Right ventricle myocardium superior (tissue), 1 donor: ENCODE measurements at regions of chr1 and their contacts with region 1.

Region 1: DNA sequence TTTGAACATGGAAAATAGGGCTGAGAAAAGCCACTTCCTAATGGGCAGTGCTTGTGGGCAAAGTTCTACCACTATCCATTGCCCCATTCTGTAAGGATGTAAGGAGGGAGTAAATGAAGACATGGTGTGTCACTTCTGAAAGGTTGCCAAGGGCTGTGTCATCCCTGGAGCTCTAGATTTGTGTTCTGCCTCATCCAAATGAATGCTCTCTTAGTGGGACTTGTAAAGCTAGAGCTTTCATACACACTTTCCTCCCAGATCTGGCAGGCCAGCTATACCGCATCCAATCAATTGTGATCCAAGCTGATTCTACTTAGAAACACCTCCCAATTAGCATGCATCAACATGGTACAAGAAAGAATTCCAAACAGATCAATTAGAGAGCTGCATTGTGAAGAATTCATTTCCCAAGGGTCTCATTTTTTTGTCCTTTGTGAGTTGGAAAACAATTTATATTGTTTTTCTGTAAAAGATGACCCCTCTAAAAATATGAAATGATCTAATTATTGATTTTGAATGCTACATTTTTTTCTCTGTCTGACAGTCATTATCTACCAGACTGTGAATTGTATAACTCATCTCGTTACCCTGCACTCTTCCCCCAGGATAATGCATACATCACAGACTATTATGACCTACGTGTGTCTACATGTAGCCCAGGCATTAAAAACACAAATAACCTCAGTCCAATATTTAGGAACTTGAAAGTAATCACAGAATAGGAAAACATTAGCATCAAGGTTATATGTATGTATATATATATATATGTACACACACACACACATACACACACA is 117.1 kb upstream of the DUSP10 start:
- DNase-seq: no peak
- ATAC-seq: no peak

Region 2: GRCh38 chr1:221907166-221907932 is 48.3 kb after region 1 on chr1:
- intact Hi-C with region 1: loop called (anchors 10 kb)
- DNase-seq: no peak
- ATAC-seq: peak; percentile 53

Region 3: DNA sequence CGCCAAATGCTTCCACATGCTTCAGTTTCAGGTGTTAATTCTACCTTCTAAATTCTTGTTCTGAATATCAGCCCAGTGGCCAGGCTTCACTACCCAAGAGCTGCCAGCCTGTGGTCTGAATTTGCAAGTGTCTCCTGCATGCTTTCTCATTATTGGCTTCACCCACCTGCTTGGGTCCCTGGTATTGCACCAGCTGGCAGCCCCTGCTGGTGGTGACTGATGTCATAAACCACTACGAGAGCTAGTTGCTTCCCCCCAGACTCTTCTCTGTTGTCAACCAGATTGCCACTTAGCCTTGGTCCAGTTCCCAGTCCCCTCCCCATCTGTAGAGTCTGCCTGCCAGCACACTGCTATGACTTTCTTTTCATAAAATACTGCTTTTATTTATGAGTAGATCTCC is 80.6 kb after region 1 on chr1:
- intact Hi-C with region 1: no loop called
- DNase-seq: no peak
- ATAC-seq: no peak